Activated T-helper 1 cell treated with anti-CD3 and anti-CD28 coated beads, Interleukin-12 subunit alpha, Interleukin-12 subunit beta, Interleukin-2, Interleukin-4 antibody, amounts not matched to agents 30 ng/mL and 10 ng/mL and 1 ng/mL, durations not matched to agents 14 hours and 24 hours and 36 hours (primary cell): ENCODE measurements at regions of chr12 and their contacts with region 1.

Region 1: GRCh38 chr12:104695453-104696148 is 238.9 kb downstream of the CHST11 start:
- DNase-seq: peak; percentile 70
- H3K4me3 Mint-ChIP-seq: peak overlapping the region; percentile 53
- H3K27ac Mint-ChIP-seq: peak overlapping the region; percentile 94
- H3K4me1 Mint-ChIP-seq: peaks cover 84% of the 10 kb centered on the region
- H3K27me3 Mint-ChIP-seq: no peaks in the 10 kb centered on the region

Region 2: DNA sequence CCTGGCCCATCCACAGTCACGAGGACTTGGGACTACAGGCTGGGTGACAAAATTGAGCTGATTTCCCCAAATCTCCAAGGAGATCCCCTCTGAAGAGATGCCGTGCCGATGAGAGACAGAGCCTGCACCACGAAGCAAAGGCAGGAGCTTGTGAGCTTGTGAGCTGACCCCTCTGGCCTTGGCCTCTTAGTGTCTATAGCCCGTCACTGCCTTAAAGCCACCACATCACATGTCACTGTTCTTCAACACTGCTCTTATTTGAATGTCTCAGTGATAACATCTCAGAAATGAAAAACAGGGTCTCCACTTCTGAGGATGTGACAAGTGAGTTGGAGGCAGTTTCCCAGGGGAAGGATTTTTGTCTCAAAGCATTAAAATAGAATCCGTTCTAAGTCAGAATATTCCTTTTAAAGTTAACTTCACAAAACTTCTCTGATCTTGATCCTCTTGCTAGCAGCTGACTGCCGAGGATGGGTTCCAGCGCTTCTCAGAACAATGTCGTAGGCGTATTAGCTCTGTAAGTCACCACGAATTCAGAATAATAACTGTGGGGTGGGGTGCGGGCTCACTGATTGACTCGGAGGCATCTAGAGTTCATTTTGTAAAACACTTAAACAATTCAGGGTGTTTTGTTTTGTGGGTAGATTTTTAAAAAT is 201.3 kb before region 1 on chr12:
- intact Hi-C with region 1: loop called (anchors 1 kb)
- DNase-seq: no peak
- H3K4me3 Mint-ChIP-seq: peak overlapping the region; percentile 64
- H3K27ac Mint-ChIP-seq: peak overlapping the region; percentile 89
- H3K4me1 Mint-ChIP-seq: peaks cover 92% of the 10 kb centered on the region
- H3K27me3 Mint-ChIP-seq: no peaks in the 10 kb centered on the region

Region 3: GRCh38 chr12:104671407-104672098 is 24.0 kb before region 1 on chr12:
- intact Hi-C with region 1: loop called (anchors 1 kb)
- DNase-seq: peak; percentile 82
- H3K4me3 Mint-ChIP-seq: peak overlapping the region; percentile 50
- H3K27ac Mint-ChIP-seq: peak overlapping the region; percentile 91
- H3K4me1 Mint-ChIP-seq: peaks cover 82% of the 10 kb centered on the region
- H3K27me3 Mint-ChIP-seq: no peaks in the 10 kb centered on the region

Region 4: GRCh38 chr12:104720339-104721038 is 24.9 kb after region 1 on chr12:
- intact Hi-C with region 1: loop called (anchors 1 kb)
- DNase-seq: peak; percentile 69
- H3K4me3 Mint-ChIP-seq: peak overlapping the region; percentile 81
- H3K27ac Mint-ChIP-seq: peak overlapping the region; percentile 94
- H3K4me1 Mint-ChIP-seq: peaks cover 78% of the 10 kb centered on the region
- H3K27me3 Mint-ChIP-seq: no peaks in the 10 kb centered on the region

Region 5: GRCh38 chr12:104763168-104763805 is 67.7 kb after region 1 on chr12:
- intact Hi-C with region 1: loop called (anchors 1 kb)
- DNase-seq: no peak
- H3K4me3 Mint-ChIP-seq: peak overlapping the region; percentile 76
- H3K27ac Mint-ChIP-seq: peak overlapping the region; percentile 91
- H3K4me1 Mint-ChIP-seq: peaks cover 70% of the 10 kb centered on the region
- H3K27me3 Mint-ChIP-seq: no peaks in the 10 kb centered on the region

Region 6: DNA sequence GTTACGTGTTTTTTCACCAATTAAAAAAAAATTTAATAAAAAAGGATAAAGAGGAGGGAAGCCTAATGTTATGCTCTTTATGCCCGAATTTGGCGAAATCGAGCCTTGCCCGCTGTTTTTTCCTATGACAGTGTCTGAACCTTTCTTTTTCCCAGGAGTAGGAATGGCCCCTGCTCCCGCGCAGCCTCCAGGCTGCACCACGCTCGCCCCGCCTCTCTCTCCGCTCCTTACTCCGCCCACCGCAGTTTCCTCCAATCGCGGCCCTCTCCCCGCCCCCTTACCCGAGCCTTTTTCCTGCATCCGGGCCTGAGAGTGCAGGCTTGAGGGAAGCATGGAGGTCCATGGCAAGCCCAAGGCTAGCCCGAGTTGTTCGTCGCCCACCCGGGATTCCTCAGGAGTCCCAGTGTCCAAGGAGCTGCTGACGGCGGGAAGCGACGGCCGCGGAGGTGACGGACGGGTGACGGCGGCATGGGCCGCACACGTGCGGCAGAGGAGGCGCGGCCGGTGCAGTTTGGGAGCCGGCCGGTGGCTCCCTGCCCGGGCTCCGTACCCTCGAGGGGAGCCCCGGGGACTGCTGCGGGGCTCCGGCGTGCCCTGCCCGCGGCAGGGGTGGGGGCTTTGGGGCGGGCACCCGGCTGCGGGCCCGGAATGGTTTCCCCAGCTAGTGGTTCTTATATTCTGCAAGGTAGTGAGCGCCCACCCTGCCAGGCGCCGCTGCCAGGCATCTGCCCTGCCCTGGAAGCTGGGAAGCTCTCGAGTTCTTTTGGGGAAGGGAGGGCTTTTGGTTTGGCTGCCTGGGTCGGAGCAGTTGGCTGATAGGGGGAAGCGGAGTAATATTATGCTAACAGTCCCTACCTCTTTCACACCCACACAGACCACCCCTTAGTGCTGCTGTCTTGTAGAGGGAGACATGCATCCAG is 290.7 kb after region 1 on chr12 and contains the start of gene NOPCHAP1:
- intact Hi-C with region 1: loop called (anchors 1 kb)
- DNase-seq: peak; percentile 83
- H3K4me3 Mint-ChIP-seq: peak within 1 kb of the TSS; percentile 89
- H3K27ac Mint-ChIP-seq: peak within 1 kb of the TSS; percentile 57
- H3K4me1 Mint-ChIP-seq: peaks cover 44% of the 10 kb centered on the region
- H3K27me3 Mint-ChIP-seq: peaks cover 3% of the 10 kb centered on the region
- total RNA-seq, gene NOPCHAP1: 28.0 and 40.0 TPM in 2 replicates

Region 7: GRCh38 chr12:105330283-105330930 is 634.8 kb after region 1 on chr12 and contains the start of gene C12orf75:
- intact Hi-C with region 1: loop called (anchors 10 kb)
- DNase-seq: peak; percentile 93
- H3K4me3 Mint-ChIP-seq: peak within 1 kb of the TSS; percentile 87
- H3K27ac Mint-ChIP-seq: peak within 1 kb of the TSS; percentile 91
- H3K4me1 Mint-ChIP-seq: peaks cover 83% of the 10 kb centered on the region
- H3K27me3 Mint-ChIP-seq: no peaks in the 10 kb centered on the region
- total RNA-seq, gene C12orf75: 87.8 and 93.4 TPM in 2 replicates